ENCODE measurements at regions of chr1 and their contacts with region 1.

Region 1: GRCh38 chr1:108816049-108816893 is 40.6 kb downstream of the AKNAD1 start:
- DNase-seq: peak; percentile 98
- H3K4me3 ChIP-seq: peak overlapping the region in 1 of 3 experiments; percentile 17
- H3K27ac ChIP-seq: peak overlapping the region; percentile 91
- H3K4me1 ChIP-seq: peaks cover 12% of the 10 kb centered on the region
- H3K27me3 ChIP-seq: no peaks in the 10 kb centered on the region
- CTCF ChIP-seq: no peak
- POLR2A ChIP-seq: peak; percentile 42

Region 2: DNA sequence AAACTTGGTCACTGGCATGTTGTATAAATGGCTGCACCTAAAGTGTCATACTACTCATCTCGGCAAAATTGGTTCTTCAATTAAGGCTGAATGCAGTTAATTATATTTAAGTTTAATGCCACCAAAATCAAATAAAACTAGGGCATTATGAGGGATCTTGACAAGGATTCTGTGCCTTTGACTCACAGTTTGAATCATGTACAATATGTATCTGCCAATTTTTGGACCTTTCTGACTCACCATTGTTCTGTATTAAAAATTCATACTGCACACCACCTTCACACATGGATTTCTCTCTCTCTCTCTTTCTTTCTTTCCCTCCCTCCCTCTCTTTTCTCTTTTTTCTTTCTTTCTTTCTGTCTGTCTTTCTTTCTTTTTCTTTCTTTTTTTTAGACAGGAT is 83.9 kb before region 1 on chr1:
- CTCF ChIA-PET with region 1: no interaction called
- POLR2A ChIA-PET with region 1: no interaction called
- dilution Hi-C with region 1: no loop called
- intact Hi-C with region 1: no loop called
- DNase-seq: no peak
- H3K4me3 ChIP-seq: no peak overlapping the region
- H3K27ac ChIP-seq: no peak overlapping the region
- H3K4me1 ChIP-seq: no peaks in the 10 kb centered on the region
- H3K27me3 ChIP-seq: peaks cover 3 to 16% of the 10 kb centered on the region in 2 experiments
- CTCF ChIP-seq: no peak
- POLR2A ChIP-seq: no peak

Region 3: DNA sequence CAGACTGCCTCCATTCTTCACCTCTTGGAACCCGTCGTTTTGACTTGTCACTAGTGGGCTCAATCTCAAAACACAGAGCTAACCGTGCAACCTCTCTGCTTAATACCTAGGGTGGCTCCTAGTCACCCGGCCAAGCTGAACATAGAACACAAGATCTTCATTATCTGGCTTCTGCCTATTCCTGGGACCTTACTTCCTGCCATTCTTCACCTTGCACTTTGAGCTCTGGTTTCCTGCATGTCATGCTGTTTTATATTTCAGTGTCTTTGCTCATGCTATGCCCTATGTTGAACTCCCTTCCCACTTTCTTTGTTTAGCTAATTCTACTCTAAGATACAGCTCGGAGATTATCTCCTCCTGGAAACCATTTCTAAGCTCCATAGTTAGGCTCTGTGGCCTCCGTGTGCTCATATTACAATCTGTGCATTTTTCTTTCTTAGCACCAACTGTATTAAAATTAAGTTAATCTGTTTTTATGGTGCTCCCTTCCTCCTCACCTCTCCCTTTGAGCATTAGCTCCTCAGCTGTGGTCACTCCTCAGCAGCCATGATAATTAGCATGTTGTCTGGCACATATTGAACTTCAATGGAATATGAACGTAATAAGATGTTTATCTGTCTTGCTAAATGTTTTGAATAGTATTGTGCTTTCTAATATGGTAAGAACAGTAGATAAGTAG is 73.6 kb after region 1 on chr1:
- CTCF ChIA-PET with region 1: interaction called, 4 read pairs
- POLR2A ChIA-PET with region 1: no interaction called
- dilution Hi-C with region 1: no loop called
- intact Hi-C with region 1: loop called (anchors 1 kb)
- DNase-seq: peak; percentile 23
- H3K4me3 ChIP-seq: no peak overlapping the region
- H3K27ac ChIP-seq: peak overlapping the region; percentile 23
- H3K4me1 ChIP-seq: peaks cover 34% of the 10 kb centered on the region
- H3K27me3 ChIP-seq: no peaks in the 10 kb centered on the region
- CTCF ChIP-seq: no peak
- POLR2A ChIP-seq: no peak

Region 4: GRCh38 chr1:108897865-108898720 is 81.8 kb after region 1 on chr1:
- CTCF ChIA-PET with region 1: interaction called, 10 read pairs
- POLR2A ChIA-PET with region 1: no interaction called
- dilution Hi-C with region 1: no loop called
- intact Hi-C with region 1: no loop called
- DNase-seq: peak; percentile 66
- H3K4me3 ChIP-seq: no peak overlapping the region
- H3K27ac ChIP-seq: no peak overlapping the region
- H3K4me1 ChIP-seq: peaks cover 4% of the 10 kb centered on the region
- H3K27me3 ChIP-seq: no peaks in the 10 kb centered on the region
- CTCF ChIP-seq: peak; percentile 36 to 45
- POLR2A ChIP-seq: no peak

Region 5: GRCh38 chr1:108963052-108963686 is 146.9 kb after region 1 on chr1 and contains the start of gene CLCC1:
- CTCF ChIA-PET with region 1: no interaction called
- POLR2A ChIA-PET with region 1: interaction called, 4 read pairs
- dilution Hi-C with region 1: no loop called
- intact Hi-C with region 1: loop called (anchors 5 kb)
- DNase-seq: peak; percentile 90
- H3K4me3 ChIP-seq: peak within 1 kb of the TSS; percentile 89 to 96 (median 94)
- H3K27ac ChIP-seq: peak within 1 kb of the TSS; percentile 76
- H3K4me1 ChIP-seq: peaks cover 9% of the 10 kb centered on the region
- H3K27me3 ChIP-seq: no peaks in the 10 kb centered on the region
- CTCF ChIP-seq: no peak
- POLR2A ChIP-seq: peak; percentile 84
- total RNA-seq, gene CLCC1: 28.8 and 36.3 TPM in 2 replicates